ENCODE measurements at regions of chr11 and their contacts with region 1.

Region 1: GRCh38 chr11:9276531-9276930 is 11.4 kb upstream of the DENND5A start:
- DNase-seq: peak in 1 of 2 experiments; percentile 27
- H3K4me3 ChIP-seq: no peak overlapping the region
- H3K4me3 Mint-ChIP-seq: no peak overlapping the region
- H3K27ac Mint-ChIP-seq: no peak overlapping the region
- H3K4me1 ChIP-seq: no peaks in the 10 kb centered on the region
- H3K4me1 Mint-ChIP-seq: no peaks in the 10 kb centered on the region
- H3K27me3 ChIP-seq: no peaks in the 10 kb centered on the region
- H3K27me3 Mint-ChIP-seq: no peaks in the 10 kb centered on the region
- CTCF ChIP-seq: peak in 1 of 2 experiments; percentile 10

Region 2: GRCh38 chr11:9193321-9193720 is 83.2 kb before region 1 on chr11:
- CTCF ChIA-PET with region 1: no interaction called
- POLR2A ChIA-PET with region 1: no interaction called
- intact Hi-C with region 1: no loop called
- DNase-seq: no peak
- H3K4me3 ChIP-seq: no peak overlapping the region
- H3K4me3 Mint-ChIP-seq: no peak overlapping the region
- H3K27ac Mint-ChIP-seq: no peak overlapping the region
- H3K4me1 ChIP-seq: no peaks in the 10 kb centered on the region
- H3K4me1 Mint-ChIP-seq: no peaks in the 10 kb centered on the region
- H3K27me3 ChIP-seq: no peaks in the 10 kb centered on the region
- H3K27me3 Mint-ChIP-seq: no peaks in the 10 kb centered on the region
- CTCF ChIP-seq: no peak

Region 3: GRCh38 chr11:9250139-9250582 is 26.4 kb before region 1 on chr11:
- CTCF ChIA-PET with region 1: no interaction called
- POLR2A ChIA-PET with region 1: no interaction called
- intact Hi-C with region 1: no loop called
- DNase-seq: no peak
- H3K4me3 ChIP-seq: no peak overlapping the region
- H3K4me3 Mint-ChIP-seq: no peak overlapping the region
- H3K27ac Mint-ChIP-seq: no peak overlapping the region
- H3K4me1 ChIP-seq: no peaks in the 10 kb centered on the region
- H3K4me1 Mint-ChIP-seq: no peaks in the 10 kb centered on the region
- H3K27me3 ChIP-seq: no peaks in the 10 kb centered on the region
- H3K27me3 Mint-ChIP-seq: no peaks in the 10 kb centered on the region
- CTCF ChIP-seq: no peak

Region 4: DNA sequence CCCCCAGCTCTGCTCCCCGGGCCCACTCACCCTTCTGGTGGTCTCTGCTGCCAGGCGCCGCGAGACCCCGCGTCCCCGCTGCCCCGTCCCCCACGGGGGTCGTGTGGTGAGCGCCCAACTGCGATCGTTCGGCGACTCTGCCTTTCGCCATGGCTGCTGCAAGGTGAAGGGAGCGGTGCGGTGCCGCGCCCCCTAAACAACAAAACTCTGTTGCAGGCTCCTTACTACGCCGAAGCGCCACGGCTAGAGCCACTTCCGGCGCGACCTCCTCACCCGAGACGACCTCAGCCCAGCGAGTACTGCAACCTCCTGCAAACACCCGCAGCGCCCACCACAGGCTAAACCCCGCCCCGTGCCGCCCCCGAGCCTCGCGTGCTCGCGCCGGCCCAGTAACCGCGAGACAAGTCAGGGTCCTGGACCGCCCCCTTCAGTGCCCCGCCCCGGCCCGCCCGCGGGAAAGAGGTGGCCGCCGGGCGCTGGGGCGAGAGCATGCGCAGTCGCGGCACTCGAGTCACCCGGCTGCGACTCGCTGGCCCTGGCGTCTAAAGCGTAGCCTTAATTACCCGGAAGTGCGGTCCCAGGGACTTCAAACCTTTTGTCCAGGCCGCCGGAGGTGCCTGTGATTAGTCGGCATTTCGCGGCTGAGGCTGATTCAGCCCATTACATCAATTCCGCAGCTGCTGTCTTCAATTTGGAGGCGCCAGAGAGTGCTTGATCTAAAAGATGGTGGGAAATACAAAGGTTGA is 37.9 kb after region 1 on chr11 and contains the start of gene TMEM41B:
- CTCF ChIA-PET with region 1: no interaction called
- POLR2A ChIA-PET with region 1: no interaction called
- intact Hi-C with region 1: loop called (anchors 5 kb)
- DNase-seq: peak; percentile 98 to 99
- H3K4me3 ChIP-seq: peak within 1 kb of the TSS; percentile 98
- H3K4me3 Mint-ChIP-seq: peak within 1 kb of the TSS; percentile 87
- H3K27ac Mint-ChIP-seq: peak within 1 kb of the TSS; percentile 99
- H3K4me1 ChIP-seq: peaks cover 37% of the 10 kb centered on the region
- H3K4me1 Mint-ChIP-seq: peaks cover 24% of the 10 kb centered on the region
- H3K27me3 ChIP-seq: no peaks in the 10 kb centered on the region
- H3K27me3 Mint-ChIP-seq: no peaks in the 10 kb centered on the region
- CTCF ChIP-seq: peak in 1 of 2 experiments; percentile 16
- total RNA-seq, gene TMEM41B: 103 and 110 TPM in 2 replicates

Measured in Caco-2 (cell line).